CD8-positive, alpha-beta T cell (primary cell): ENCODE measurements at regions of chr2 and their contacts with region 1.

Region 1: GRCh38 chr2:113157118-113157896 is 16.5 kb upstream of the PSD4 start:
- DNase-seq: peak in 7 of 9 experiments; percentile 34 to 75 (median 51)
- ATAC-seq: peak; percentile 83
- H3K4me3 ChIP-seq: peak overlapping the region; percentile 63 to 76
- H3K4me3 Mint-ChIP-seq: peak overlapping the region; percentile 91
- H3K27ac ChIP-seq: peak overlapping the region; percentile 21 to 55
- H3K27ac Mint-ChIP-seq: peak overlapping the region; percentile 91
- H3K4me1 ChIP-seq: peaks cover 20% of the 10 kb centered on the region
- H3K4me1 Mint-ChIP-seq: peaks cover 26% of the 10 kb centered on the region
- H3K27me3 ChIP-seq: no peaks in the 10 kb centered on the region
- H3K27me3 Mint-ChIP-seq: no peaks in the 10 kb centered on the region
- CTCF ChIP-seq: no peak

Region 2: GRCh38 chr2:113167115-113167932 is 10.0 kb after region 1 on chr2:
- CTCF ChIA-PET with region 1: interaction called, 9 read pairs
- POLR2A ChIA-PET with region 1: interaction called, 7 read pairs
- intact Hi-C with region 1: loop called (anchors 1 to 2 kb)
- DNase-seq: peak in 6 of 9 experiments; percentile 31 to 66 (median 43)
- ATAC-seq: peak; percentile 68
- H3K4me3 ChIP-seq: peak overlapping the region in 1 of 2 experiments; percentile 24
- H3K4me3 Mint-ChIP-seq: peak overlapping the region; percentile 81
- H3K27ac ChIP-seq: peak overlapping the region; percentile 57 to 75
- H3K27ac Mint-ChIP-seq: peak overlapping the region; percentile 98
- H3K4me1 ChIP-seq: peaks cover 63% of the 10 kb centered on the region
- H3K4me1 Mint-ChIP-seq: peaks cover 75% of the 10 kb centered on the region
- H3K27me3 ChIP-seq: no peaks in the 10 kb centered on the region
- H3K27me3 Mint-ChIP-seq: no peaks in the 10 kb centered on the region
- CTCF ChIP-seq: no peak

Region 3: DNA sequence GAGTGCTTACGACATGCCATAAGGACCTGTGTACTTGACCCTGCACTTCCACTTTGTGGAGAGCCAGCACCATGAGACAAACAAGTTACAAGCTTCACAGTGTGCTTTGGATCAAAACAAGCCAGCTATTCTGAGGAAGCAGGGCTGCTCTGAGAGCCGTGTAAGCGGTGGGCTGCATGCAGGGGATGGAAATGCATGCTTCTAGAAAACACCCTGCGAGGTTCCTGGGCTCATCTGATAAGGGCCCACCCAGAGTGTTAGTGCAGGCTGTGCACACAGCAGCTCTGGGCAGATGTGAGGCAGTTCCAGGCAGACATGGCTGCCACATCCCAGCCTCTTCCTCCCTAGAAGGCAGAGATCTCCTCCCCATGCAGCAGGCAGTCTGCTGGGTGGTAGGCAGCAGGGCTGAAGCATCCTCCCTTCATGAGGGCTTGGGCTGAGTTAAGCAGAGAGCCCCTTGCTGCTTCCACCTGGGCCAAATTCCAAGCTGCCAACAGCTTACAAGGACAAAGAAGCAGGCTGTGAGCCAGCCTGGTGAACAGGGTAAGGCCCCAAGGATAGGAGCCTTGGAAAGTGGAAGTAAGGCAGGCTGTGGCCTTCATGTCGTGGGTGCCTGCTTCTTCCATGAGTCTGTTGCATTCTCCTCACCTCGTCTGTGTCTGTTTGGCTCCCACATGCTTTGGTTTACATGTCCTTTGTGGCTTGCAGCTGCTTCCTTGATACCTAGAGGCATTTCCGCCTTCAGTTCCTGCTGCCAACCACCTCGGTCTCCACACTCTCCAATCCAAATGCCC is 24.1 kb after region 1 on chr2:
- CTCF ChIA-PET with region 1: interaction called, 22 read pairs
- POLR2A ChIA-PET with region 1: interaction called, 5 read pairs
- intact Hi-C with region 1: no loop called
- DNase-seq: peak in 3 of 9 experiments; percentile 24 to 51 (median 32)
- ATAC-seq: peak; percentile 15
- H3K4me3 ChIP-seq: peak overlapping the region; percentile 2 to 4
- H3K4me3 Mint-ChIP-seq: peak overlapping the region; percentile 87
- H3K27ac ChIP-seq: peak overlapping the region; percentile 23 to 62
- H3K27ac Mint-ChIP-seq: peak overlapping the region; percentile 93
- H3K4me1 ChIP-seq: peaks cover 100% of the 10 kb centered on the region
- H3K4me1 Mint-ChIP-seq: peaks cover 96% of the 10 kb centered on the region
- H3K27me3 ChIP-seq: no peaks in the 10 kb centered on the region
- H3K27me3 Mint-ChIP-seq: no peaks in the 10 kb centered on the region
- CTCF ChIP-seq: no peak

Region 4: GRCh38 chr2:113266431-113266830 is 109.1 kb after region 1 on chr2:
- CTCF ChIA-PET with region 1: no interaction called
- POLR2A ChIA-PET with region 1: no interaction called
- intact Hi-C with region 1: no loop called
- DNase-seq: no peak
- ATAC-seq: no peak
- H3K4me3 ChIP-seq: no peak overlapping the region
- H3K4me3 Mint-ChIP-seq: no peak overlapping the region
- H3K27ac ChIP-seq: no peak overlapping the region
- H3K27ac Mint-ChIP-seq: no peak overlapping the region
- H3K4me1 ChIP-seq: peaks cover under 1% of the 10 kb centered on the region
- H3K4me1 Mint-ChIP-seq: no peaks in the 10 kb centered on the region
- H3K27me3 ChIP-seq: no peaks in the 10 kb centered on the region
- H3K27me3 Mint-ChIP-seq: peaks cover 4% of the 10 kb centered on the region
- CTCF ChIP-seq: no peak